ENCODE measurements at regions of chr11 and their contacts with region 1.

Region 1: DNA sequence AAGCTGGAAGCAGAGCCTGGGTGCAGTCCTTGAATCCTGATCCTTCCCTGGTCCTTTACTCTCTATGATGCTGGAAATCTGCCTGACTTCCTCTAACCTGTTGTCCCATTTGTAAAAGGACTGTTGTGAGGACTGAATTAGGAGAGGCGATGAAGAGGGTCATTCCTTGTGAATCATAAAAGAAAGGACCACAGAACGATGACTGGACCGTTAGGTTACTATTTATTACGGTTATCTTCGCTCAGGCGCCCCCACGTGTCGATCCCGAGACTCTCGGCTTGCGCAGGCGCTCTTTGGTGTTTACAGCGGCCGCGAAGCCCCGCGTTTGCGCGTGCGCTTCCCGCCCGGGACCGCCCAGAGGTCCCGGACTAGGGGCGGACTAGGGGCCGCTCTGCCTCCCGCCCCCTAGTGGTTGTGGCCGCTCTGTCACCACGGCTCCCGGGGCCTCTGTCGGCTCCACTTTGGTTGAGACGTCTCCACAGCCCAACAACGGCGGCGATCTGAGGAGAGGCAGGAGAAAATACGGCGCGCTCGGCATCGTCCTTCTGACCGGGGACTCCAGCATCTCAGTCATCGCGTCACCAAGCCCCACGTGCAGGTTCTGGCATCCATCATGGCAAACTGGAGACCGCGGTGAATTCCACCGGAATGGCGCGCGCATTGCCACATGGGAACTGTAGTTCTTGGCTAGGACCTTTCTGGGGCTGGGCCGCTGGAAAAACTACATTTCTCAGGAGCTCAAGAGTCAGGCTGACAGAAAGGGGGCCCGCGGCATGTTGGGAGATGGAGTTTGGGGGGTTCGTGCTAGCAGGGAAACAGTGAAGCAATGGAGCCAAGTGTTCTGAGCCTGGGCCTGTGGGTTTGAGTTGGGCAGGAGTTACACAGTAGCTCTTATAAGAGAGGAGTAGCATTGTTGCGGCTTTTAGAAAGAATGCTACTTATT is at the start of gene STARD10:
- DNase-seq: peak; percentile 96 to 98 (median 97)
- ATAC-seq: peak; percentile 99
- H3K4me3 ChIP-seq: peak within 1 kb of the TSS; percentile 38
- H3K4me1 ChIP-seq: peaks cover 13% of the 10 kb centered on the region
- CTCF ChIP-seq: peak; percentile 95
- total RNA-seq, gene STARD10: 177 to 472 (median 306) TPM

Region 2: DNA sequence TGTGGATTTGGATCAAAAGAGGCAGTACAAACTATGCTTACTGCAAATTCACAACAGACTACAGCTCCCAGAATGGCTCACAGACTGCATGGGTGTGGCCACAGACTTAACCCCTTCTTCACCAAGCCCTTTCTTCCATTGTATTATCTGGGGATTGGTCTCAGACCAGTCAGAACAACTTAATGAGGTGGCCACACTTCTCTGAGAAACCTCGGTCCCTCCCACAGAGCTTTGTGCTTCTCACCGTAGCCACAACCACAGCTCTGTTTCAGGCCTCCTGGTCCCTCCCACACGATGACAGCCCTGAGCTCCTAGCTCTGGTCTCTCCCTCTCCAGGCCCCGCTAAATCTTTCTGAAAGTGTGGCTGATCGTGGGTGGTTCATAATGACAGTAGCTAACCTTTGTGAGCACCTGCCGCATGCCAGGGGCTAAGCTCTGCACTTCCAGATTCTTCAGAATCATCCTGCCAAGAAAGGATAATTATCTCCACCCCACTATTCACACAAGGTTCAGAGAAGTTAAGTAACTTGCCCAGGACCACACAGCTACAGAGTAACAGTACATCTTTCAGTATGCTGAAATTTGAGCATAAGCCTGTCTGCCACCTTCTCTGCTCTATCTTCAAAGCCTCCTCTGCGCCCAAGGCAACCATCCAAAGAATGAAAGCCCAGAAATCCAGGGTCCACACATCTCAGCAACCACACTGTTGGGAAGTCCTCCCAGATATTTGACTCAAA is 124.9 kb before region 1 on chr11:
- intact Hi-C with region 1: no loop called
- DNase-seq: no peak
- ATAC-seq: no peak
- H3K4me3 ChIP-seq: no peak overlapping the region
- H3K4me1 ChIP-seq: no peaks in the 10 kb centered on the region
- CTCF ChIP-seq: no peak

Region 3: GRCh38 chr11:72722050-72722748 is 71.5 kb before region 1 on chr11:
- intact Hi-C with region 1: loop called (anchors 5 to 10 kb)
- DNase-seq: peak; percentile 92 to 93 (median 92)
- ATAC-seq: peak; percentile 87
- H3K4me3 ChIP-seq: peak overlapping the region; percentile 46
- H3K4me1 ChIP-seq: peaks cover 24% of the 10 kb centered on the region
- CTCF ChIP-seq: no peak

Region 4: GRCh38 chr11:72930008-72930407 is 136.3 kb after region 1 on chr11:
- intact Hi-C with region 1: no loop called
- DNase-seq: no peak
- ATAC-seq: no peak
- H3K4me3 ChIP-seq: no peak overlapping the region
- H3K4me1 ChIP-seq: no peaks in the 10 kb centered on the region
- CTCF ChIP-seq: no peak

Region 5: DNA sequence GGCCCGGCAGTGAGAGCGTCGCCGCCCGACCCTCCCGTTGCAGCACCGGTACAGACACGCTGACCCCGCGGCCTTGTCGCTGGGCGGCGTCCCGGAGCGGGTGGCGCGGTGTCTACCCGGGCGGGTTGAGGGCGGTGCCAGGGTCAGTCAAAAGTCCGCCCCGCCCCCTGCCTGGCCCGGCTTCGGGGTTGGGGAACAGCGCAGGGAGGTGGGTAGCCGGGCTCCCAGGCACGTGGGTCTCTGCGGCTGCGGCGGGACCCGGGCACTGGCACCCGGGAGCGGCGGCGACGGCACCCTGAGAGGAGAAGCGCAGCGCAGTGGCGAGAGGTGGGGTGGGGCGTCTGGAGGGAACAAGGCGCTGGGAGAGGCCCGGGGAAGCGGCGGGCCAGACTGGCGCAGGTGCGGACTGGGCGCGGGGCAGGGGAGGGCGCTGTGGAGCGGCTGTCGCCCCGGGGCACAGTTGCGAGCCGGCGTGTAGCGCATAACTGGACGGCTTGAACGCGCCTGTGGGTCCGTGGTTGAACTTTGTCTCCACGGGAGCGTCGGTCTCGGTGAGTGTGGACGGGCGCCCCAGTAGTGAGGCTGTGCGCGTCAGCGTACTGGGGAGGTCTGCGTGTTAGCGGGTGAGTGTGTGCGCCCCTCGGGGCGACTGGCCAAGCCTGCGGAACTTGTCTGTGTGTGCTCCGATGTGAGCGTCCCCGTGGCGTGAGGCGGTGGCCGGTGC is 424.6 kb after region 1 on chr11 and contains the start of gene P2RY2:
- intact Hi-C with region 1: no loop called
- DNase-seq: peak; percentile 88 to 93 (median 91)
- ATAC-seq: peak; percentile 95
- H3K4me3 ChIP-seq: peak within 1 kb of the TSS; percentile 17
- H3K4me1 ChIP-seq: peaks cover 14% of the 10 kb centered on the region
- CTCF ChIP-seq: peak; percentile 42
- total RNA-seq, gene P2RY2: 7.6 to 20.6 (median 14.5) TPM

Measured in mucosa of descending colon (tissue), 3 donors.